ENCODE measurements at regions of chrX and their contacts with region 1.

Region 1: GRCh38 chrX:49100704-49101628 is 21.3 kb upstream of the WDR45 start:
- DNase-seq: peak; percentile 92
- ATAC-seq: peak; percentile 97
- H3K4me3 Mint-ChIP-seq: peak overlapping the region; percentile 85
- H3K27ac Mint-ChIP-seq: peak overlapping the region; percentile 89
- H3K4me1 Mint-ChIP-seq: peaks cover 7% of the 10 kb centered on the region
- H3K27me3 Mint-ChIP-seq: no peaks in the 10 kb centered on the region

Region 2: GRCh38 chrX:48891402-48892288 is 209.3 kb before region 1 on chrX:
- CTCF ChIA-PET with region 1: no interaction called
- POLR2A ChIA-PET with region 1: no interaction called
- intact Hi-C with region 1: loop called in 1 of 2 experiments (anchors 2 kb)
- DNase-seq: peak; percentile 85
- ATAC-seq: peak; percentile 92
- H3K4me3 Mint-ChIP-seq: peak overlapping the region; percentile 79
- H3K27ac Mint-ChIP-seq: peak overlapping the region; percentile 55
- H3K4me1 Mint-ChIP-seq: peaks cover 23% of the 10 kb centered on the region
- H3K27me3 Mint-ChIP-seq: no peaks in the 10 kb centered on the region

Region 3: GRCh38 chrX:49073601-49074571 is 27.1 kb before region 1 on chrX and contains the start of gene PRAF2:
- CTCF ChIA-PET with region 1: no interaction called
- POLR2A ChIA-PET with region 1: no interaction called
- intact Hi-C with region 1: loop called in 1 of 2 experiments (anchors 1 kb)
- DNase-seq: peak; percentile 94
- ATAC-seq: peak; percentile 98
- H3K4me3 Mint-ChIP-seq: peak within 1 kb of the TSS; percentile 78
- H3K27ac Mint-ChIP-seq: peak within 1 kb of the TSS; percentile 73
- H3K4me1 Mint-ChIP-seq: peaks cover 19% of the 10 kb centered on the region
- H3K27me3 Mint-ChIP-seq: no peaks in the 10 kb centered on the region
- total RNA-seq, gene PRAF2: 9.1 to 11.5 TPM

Region 4: DNA sequence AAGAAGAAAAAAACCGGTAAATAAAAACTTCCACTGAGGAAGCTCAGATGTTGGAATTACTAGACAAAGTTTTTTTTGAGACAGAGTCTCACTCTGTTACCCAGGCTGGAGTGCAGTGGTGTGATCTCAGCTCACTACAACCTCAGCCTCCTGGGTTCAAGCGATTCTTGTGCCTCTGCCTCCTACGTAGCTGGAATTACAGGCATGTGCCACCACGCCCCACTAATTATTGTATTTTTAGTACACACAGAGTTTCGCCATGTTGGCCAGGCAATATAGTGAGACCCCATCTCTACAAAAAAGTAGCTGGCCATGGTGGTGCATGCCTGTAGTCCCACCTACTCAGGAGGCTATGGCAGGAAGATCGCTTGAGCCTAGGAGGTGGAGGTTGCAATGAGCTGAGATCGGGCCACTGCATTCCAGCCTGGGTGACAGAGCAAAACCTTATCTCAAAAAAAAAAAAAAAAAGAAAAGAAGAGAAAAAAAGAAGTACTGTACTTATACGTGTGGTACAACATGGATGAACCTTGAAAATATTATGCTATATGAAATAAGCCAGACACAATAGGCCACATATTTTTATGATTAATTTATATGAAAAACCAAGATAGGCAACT is 11.5 kb before region 1 on chrX:
- CTCF ChIA-PET with region 1: no interaction called
- POLR2A ChIA-PET with region 1: no interaction called
- intact Hi-C with region 1: no loop called
- DNase-seq: no peak
- ATAC-seq: no peak
- H3K4me3 Mint-ChIP-seq: no peak overlapping the region
- H3K27ac Mint-ChIP-seq: no peak overlapping the region
- H3K4me1 Mint-ChIP-seq: no peaks in the 10 kb centered on the region
- H3K27me3 Mint-ChIP-seq: no peaks in the 10 kb centered on the region

Region 5: GRCh38 chrX:49120099-49120498 is 19.1 kb after region 1 on chrX:
- CTCF ChIA-PET with region 1: interaction called, 3 read pairs
- POLR2A ChIA-PET with region 1: no interaction called
- intact Hi-C with region 1: loop called (anchors 1 to 2 kb)
- DNase-seq: no peak
- ATAC-seq: no peak
- H3K4me3 Mint-ChIP-seq: no peak overlapping the region
- H3K27ac Mint-ChIP-seq: peak overlapping the region; percentile 56
- H3K4me1 Mint-ChIP-seq: peaks cover 20% of the 10 kb centered on the region
- H3K27me3 Mint-ChIP-seq: no peaks in the 10 kb centered on the region

Region 6: DNA sequence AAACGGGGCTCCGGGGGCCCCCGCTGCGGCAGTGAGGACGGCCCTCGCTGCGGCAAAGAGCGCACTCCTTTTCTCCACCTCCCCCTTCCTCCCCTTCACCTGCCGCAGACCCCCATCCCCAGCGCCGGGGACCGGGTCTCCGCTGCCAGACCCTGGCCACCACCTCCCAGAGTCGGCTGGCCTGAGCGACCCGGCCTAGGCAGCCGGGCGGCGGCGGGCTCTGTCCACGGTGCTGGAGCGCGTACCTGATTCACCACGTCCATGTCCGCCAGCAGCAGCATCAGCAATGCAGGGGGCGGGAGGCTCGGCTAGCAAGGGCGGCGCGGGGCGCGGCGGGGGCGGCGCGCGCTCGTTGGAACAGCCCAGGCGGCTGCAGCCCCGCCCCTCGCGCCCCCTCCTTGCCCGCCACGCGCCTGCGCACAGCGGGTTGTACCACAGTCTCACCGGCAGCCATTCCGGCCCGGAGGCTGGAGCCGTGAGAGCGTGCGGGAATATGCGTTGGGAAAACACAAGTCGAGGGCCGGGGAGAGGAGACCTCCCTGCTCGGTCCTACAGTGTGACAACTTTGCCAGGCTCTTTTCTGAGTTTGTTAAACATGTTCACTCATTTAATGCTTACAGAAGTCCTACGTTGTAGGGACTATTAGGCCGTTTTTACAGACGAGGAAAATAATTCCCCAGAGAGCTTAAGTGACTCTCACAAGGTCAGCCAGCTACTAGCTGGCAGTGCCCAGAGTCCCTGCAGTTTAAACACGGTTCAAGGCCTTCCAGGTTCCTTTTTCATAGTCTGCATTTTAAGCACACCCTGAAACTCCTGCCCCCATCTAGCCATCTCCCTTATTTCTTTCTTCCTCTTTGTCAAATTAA is 99.2 kb after region 1 on chrX and contains the start of gene SYP:
- CTCF ChIA-PET with region 1: no interaction called
- POLR2A ChIA-PET with region 1: no interaction called
- intact Hi-C with region 1: loop called in 1 of 2 experiments (anchors 1 kb)
- DNase-seq: peak; percentile 94
- ATAC-seq: peak; percentile 95
- H3K4me3 Mint-ChIP-seq: peak within 1 kb of the TSS; percentile 60
- H3K27ac Mint-ChIP-seq: peak within 1 kb of the TSS; percentile 69
- H3K4me1 Mint-ChIP-seq: peaks cover 19% of the 10 kb centered on the region
- H3K27me3 Mint-ChIP-seq: no peaks in the 10 kb centered on the region
- total RNA-seq, gene SYP: 7.2 to 8.5 TPM

Region 7: GRCh38 chrX:49211074-49211473 is 110.1 kb after region 1 on chrX:
- CTCF ChIA-PET with region 1: no interaction called
- POLR2A ChIA-PET with region 1: no interaction called
- intact Hi-C with region 1: no loop called
- DNase-seq: no peak
- ATAC-seq: no peak
- H3K4me3 Mint-ChIP-seq: no peak overlapping the region
- H3K27ac Mint-ChIP-seq: no peak overlapping the region
- H3K4me1 Mint-ChIP-seq: no peaks in the 10 kb centered on the region
- H3K27me3 Mint-ChIP-seq: no peaks in the 10 kb centered on the region

Region 8: GRCh38 chrX:49226946-49227345 is 126.0 kb after region 1 on chrX:
- CTCF ChIA-PET with region 1: no interaction called
- POLR2A ChIA-PET with region 1: no interaction called
- intact Hi-C with region 1: no loop called
- DNase-seq: no peak
- ATAC-seq: no peak
- H3K4me3 Mint-ChIP-seq: no peak overlapping the region
- H3K27ac Mint-ChIP-seq: no peak overlapping the region
- H3K4me1 Mint-ChIP-seq: peaks cover 13% of the 10 kb centered on the region
- H3K27me3 Mint-ChIP-seq: peaks cover 3% of the 10 kb centered on the region

Measured in activated CD4-positive, alpha-beta T cell treated with anti-CD3 and anti-CD28 coated beads for 36 hours (primary cell).